ENCODE measurements at regions of chr6 and their contacts with region 1.

Region 1: GRCh38 chr6:13873285-13874190 is 51.2 kb upstream of the RNF182 start:
- DNase-seq: peak; percentile 90
- H3K4me3 Mint-ChIP-seq: peak overlapping the region; percentile 85
- H3K27ac Mint-ChIP-seq: no peak overlapping the region
- H3K4me1 Mint-ChIP-seq: peaks cover 9% of the 10 kb centered on the region
- H3K27me3 Mint-ChIP-seq: peaks cover 17% of the 10 kb centered on the region

Region 2: GRCh38 chr6:13795041-13795750 is 78.3 kb before region 1 on chr6:
- intact Hi-C with region 1: loop called (anchors 5 kb)
- DNase-seq: peak; percentile 95
- H3K4me3 Mint-ChIP-seq: no peak overlapping the region
- H3K27ac Mint-ChIP-seq: peak overlapping the region; percentile 51
- H3K4me1 Mint-ChIP-seq: peaks cover 14% of the 10 kb centered on the region
- H3K27me3 Mint-ChIP-seq: no peaks in the 10 kb centered on the region

Region 3: GRCh38 chr6:13924146-13924948 is 50.8 kb after region 1 on chr6:
- intact Hi-C with region 1: no loop called
- DNase-seq: no peak
- H3K4me3 Mint-ChIP-seq: peak overlapping the region; percentile 84
- H3K27ac Mint-ChIP-seq: peak overlapping the region; percentile 31
- H3K4me1 Mint-ChIP-seq: peaks cover 13% of the 10 kb centered on the region
- H3K27me3 Mint-ChIP-seq: peaks cover 68% of the 10 kb centered on the region

Region 4: DNA sequence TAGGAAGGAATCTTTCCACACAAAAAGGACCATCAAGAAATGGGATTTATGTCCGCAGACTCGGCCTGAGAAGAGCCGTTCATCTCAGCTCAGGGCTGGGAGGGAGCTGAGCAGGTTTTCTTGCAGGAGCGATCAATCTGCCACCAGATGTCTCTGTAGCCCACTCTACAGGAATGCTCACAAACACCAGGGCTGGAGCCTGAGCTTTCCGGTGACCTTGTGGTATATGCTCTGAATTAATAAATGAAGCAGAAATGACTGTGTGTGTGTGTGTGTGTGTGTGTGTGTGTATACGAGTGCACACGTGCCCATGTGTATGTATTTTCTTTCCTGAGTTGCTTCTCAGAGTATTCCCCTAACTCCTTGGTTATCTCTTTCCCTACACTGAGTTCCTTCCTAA is 256.0 kb after region 1 on chr6:
- intact Hi-C with region 1: no loop called
- DNase-seq: peak; percentile 72
- H3K4me3 Mint-ChIP-seq: no peak overlapping the region
- H3K27ac Mint-ChIP-seq: peak overlapping the region; percentile 58
- H3K4me1 Mint-ChIP-seq: peaks cover 35% of the 10 kb centered on the region
- H3K27me3 Mint-ChIP-seq: no peaks in the 10 kb centered on the region